GM12878 (cell line): ENCODE measurements at regions of chrX and their contacts with region 1.

Region 1: GRCh38 chrX:107760304-107761077 is 15.1 kb downstream of the TSC22D3 start:
- DNase-seq: peak; percentile 32
- ATAC-seq: peak; percentile 46
- H3K4me3 ChIP-seq: no peak overlapping the region
- H3K27ac ChIP-seq: no peak overlapping the region
- H3K4me1 ChIP-seq: no peaks in the 10 kb centered on the region
- H3K27me3 ChIP-seq: no peaks in the 10 kb centered on the region
- CTCF ChIP-seq: no peak
- EP300 ChIP-seq: no peak
- POLR2A ChIP-seq: no peak
- RAD21 ChIP-seq: no peak

Region 2: DNA sequence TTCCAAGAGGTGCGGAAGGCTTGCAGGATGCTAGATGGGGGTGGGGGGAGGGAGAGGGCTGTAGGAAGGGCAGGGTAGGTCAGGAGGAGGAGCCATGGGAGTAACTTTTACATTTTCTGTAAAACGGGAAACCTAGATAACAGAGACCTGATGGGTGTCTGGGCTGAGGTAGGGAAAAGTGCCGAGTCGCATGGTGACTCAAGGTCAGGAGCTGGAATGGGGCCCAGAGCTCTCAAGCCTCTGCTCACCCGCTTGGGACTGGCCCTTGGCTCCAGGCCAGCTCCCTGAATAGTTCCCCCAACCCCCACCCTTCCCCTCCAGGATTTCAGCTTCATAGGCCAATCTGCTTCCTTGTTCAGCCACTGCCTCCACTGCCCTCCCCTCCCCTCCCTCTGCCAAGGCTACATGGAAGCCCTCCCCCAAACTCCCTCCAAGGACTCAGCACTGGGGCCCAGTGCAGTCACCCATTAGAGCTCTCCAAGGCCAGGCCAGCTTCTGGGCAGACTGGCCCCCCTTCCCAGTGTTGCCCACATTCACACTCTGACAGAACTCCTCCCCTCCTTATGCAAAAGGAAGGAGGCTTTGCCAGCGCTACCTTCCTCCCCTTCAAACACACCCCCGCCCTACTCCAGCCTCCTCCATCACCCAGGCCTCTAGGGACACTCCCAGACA is 28.5 kb before region 1 on chrX:
- CTCF ChIA-PET with region 1: interaction called, 3 read pairs
- POLR2A ChIA-PET with region 1: interaction called, 6 read pairs
- RAD21 ChIA-PET with region 1: interaction called, 13 read pairs
- SMC1A ChIA-PET with region 1: interaction called, 7 read pairs
- in situ Hi-C with region 1: no loop called
- intact Hi-C with region 1: no loop called
- DNase-seq: no peak
- ATAC-seq: no peak
- H3K4me3 ChIP-seq: no peak overlapping the region
- H3K27ac ChIP-seq: no peak overlapping the region
- H3K4me1 ChIP-seq: no peaks in the 10 kb centered on the region
- H3K27me3 ChIP-seq: no peaks in the 10 kb centered on the region
- CTCF ChIP-seq: no peak
- EP300 ChIP-seq: no peak
- POLR2A ChIP-seq: no peak
- RAD21 ChIP-seq: no peak

Region 3: DNA sequence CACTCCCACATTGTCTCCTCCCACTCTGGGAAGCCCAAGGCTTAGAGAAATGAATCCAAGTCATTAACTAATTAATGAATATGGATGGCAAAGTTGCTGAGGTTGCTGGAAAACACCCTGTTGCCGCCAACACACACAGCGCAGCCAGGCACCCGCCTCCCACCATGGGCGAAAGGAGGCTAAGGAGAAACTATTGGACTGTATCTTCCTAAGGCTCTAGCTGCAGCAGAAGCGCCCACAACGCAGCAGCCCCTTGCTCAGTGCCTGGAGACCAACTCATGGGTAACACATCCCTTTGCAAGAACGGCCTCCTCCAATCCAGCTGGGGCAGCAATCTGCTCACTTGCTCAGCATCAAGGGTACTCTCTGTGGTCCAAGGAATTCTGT is 19.1 kb before region 1 on chrX:
- CTCF ChIA-PET with region 1: interaction called, 6 read pairs
- POLR2A ChIA-PET with region 1: interaction called, 3 read pairs
- RAD21 ChIA-PET with region 1: interaction called, 3 read pairs
- SMC1A ChIA-PET with region 1: interaction called, 17 read pairs
- in situ Hi-C with region 1: no loop called
- intact Hi-C with region 1: no loop called
- DNase-seq: no peak
- ATAC-seq: no peak
- H3K4me3 ChIP-seq: peak overlapping the region; percentile 32; the same call in 1 of the 2 replicates
- H3K27ac ChIP-seq: no peak overlapping the region
- H3K4me1 ChIP-seq: peaks cover 6% of the 10 kb centered on the region
- H3K27me3 ChIP-seq: no peaks in the 10 kb centered on the region; a peak in 1 of 4 replicates
- CTCF ChIP-seq: no peak
- EP300 ChIP-seq: no peak
- POLR2A ChIP-seq: no peak
- RAD21 ChIP-seq: no peak